ENCODE measurements at regions of chr18 and their contacts with region 1.

Region 1: GRCh38 chr18:35143622-35144596 is 96.9 kb upstream of the ZNF397 start:
- DNase-seq: peak in 8 of 10 donors; percentile 25 to 93 (median 66)

Region 2: GRCh38 chr18:34880882-34881834 is 262.8 kb before region 1 on chr18:
- intact Hi-C with region 1: loop called (anchors 1 kb)
- DNase-seq: no peak

Region 3: DNA sequence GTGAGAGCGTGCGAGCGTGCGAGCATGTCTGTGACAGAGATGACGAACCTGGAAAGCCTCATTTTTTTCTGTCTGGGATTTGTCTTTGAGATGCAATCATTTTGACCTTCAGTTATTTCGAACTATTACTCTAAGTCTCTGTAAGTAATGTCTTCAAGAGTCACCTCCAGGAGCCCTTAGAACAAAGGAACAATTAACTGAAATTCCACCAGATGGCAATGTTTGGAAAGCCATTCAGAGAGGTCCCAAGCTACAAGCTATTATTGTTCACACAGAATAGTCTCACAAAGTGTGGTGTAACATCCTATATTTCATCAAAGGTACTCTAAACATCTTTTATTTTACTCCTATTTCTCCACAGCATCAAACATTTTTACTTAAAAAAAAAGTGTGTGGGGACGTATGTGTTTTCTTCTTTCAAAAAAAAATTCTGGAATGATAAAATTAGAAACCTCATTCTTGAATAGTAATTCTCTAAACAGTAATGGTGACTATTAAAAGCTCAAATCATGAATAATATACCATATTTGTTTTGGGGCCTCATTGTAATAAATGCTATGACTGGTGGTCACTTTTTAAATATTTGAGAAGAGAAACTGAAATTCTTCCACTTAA is 137.8 kb before region 1 on chr18:
- intact Hi-C with region 1: loop called (anchors 2 kb)
- DNase-seq: no peak

Region 4: GRCh38 chr18:35040988-35041814 is 102.7 kb before region 1 on chr18 and contains the start of gene MAPRE2:
- intact Hi-C with region 1: loop called (anchors 5 kb)
- DNase-seq: peak; percentile 98 to 100 (median 100)

Region 5: GRCh38 chr18:35240664-35241447 is 96.9 kb after region 1 on chr18 and contains the start of gene ZNF397:
- intact Hi-C with region 1: no loop called
- DNase-seq: peak; percentile 94 to 99 (median 98)

Region 6: GRCh38 chr18:35386600-35387351 is 242.9 kb after region 1 on chr18:
- intact Hi-C with region 1: no loop called
- DNase-seq: peak in 6 of 10 donors; percentile 44 to 92 (median 52)

Measured in posterior cingulate gyrus (tissue), 11 donors.